ENCODE measurements at regions of chr20 and their contacts with region 1.

Region 1: DNA sequence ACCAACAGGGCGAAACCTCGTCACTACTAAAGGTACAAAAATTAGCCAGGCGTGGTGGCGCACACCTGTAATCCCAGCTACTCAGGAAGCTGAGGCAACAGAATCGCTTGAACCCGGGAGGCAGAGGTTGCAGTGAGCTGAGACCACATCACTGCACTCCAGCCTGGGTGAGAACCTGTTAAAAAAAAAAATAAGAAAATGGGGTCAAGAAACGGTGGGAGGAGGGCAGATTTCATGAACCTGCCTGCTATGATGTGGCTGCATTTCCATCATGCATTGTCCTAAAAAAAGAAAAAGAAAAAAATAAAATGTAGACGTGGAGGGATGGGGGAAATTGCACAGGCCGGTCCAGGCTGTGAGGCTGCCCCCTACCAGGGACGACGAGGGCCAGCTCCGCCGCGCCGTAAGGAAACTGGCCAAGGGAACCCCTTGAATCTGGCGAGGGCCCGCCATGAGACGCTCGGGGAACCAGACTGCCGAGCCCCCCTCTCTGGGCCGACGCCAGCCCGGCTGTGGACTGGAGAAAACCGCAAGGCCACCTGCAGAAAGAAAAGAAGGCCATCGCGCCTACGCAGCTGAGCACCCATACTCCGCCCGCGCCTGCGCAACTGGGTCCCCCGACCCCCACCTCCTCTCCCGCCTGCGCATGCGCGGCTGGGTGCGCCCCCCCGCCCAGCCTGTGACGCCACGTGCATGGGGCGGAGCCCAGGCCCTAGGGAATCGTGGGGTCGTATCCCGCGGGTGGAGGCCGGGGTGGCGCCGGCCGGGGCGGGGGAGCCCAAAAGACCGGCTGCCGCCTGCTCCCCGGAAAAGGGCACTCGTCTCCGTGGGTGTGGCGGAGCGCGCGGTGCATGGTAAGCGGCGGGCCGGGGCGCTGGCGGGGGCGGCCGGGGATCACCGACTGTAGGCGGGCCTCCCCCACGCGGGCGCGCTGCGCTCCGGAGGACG is at the start of gene ENTPD6:
- DNase-seq: peak; percentile 80
- H3K4me3 ChIP-seq: peak within 1 kb of the TSS; percentile 82 to 95 (median 91)
- H3K27ac ChIP-seq: peak within 1 kb of the TSS; percentile 51
- H3K4me1 ChIP-seq: peaks cover 11% of the 10 kb centered on the region
- H3K27me3 ChIP-seq: no peaks in the 10 kb centered on the region
- CTCF ChIP-seq: peak in 1 of 2 donors; percentile 18
- total RNA-seq, gene ENTPD6: 82.9 to 130 TPM

Region 2: DNA sequence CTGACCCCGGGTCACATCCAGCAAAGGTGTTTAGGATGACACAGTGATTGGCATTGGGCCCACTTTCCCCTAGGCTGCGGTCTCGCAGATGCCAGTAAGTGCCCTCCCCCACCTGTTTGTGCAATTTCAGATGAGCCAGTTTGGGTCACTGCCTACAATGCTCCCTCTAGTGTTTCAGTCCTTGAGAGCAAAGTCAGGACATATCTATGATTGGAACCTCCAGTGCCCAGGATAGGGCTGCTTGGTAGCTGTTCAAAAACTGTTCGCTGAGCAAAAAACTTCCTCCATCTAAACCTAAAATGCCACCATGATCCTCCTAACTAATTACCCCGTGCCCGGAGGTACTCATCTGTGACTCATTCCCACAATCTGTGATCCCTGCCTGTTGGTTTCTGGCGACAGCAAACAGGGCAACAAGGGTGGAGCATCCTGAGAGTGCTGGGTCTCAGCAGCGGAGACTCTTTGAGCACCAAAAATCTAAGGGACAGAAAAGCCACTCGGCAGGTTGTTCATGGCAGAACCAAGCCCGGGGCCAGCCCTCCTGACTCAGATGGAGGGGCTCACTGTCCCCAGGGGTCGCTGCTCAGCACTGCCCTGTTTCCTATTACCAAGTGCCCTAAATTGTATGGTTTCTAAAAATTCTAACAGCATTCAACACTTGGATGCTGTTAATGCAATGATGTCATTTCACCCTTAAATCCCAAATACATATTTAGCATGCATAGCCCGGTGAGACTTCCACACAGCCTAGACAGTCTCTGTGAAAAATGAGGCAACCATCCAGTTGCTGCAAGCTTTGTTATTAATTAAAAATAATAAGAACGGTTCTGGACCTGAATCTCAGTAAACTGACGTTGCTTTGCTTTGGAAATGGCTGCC is 118.3 kb before region 1 on chr20:
- CTCF ChIA-PET with region 1: no interaction called
- dilution Hi-C with region 1: no loop called
- in situ Hi-C with region 1: no loop called
- intact Hi-C with region 1: loop called (anchors 5 kb)
- DNase-seq: peak; percentile 65
- H3K4me3 ChIP-seq: peak overlapping the region in 1 of 3 experiments; percentile 8
- H3K27ac ChIP-seq: no peak overlapping the region
- H3K4me1 ChIP-seq: peaks cover 25% of the 10 kb centered on the region
- H3K27me3 ChIP-seq: peaks cover 17% of the 10 kb centered on the region
- CTCF ChIP-seq: peak; percentile 30 to 58

Region 3: DNA sequence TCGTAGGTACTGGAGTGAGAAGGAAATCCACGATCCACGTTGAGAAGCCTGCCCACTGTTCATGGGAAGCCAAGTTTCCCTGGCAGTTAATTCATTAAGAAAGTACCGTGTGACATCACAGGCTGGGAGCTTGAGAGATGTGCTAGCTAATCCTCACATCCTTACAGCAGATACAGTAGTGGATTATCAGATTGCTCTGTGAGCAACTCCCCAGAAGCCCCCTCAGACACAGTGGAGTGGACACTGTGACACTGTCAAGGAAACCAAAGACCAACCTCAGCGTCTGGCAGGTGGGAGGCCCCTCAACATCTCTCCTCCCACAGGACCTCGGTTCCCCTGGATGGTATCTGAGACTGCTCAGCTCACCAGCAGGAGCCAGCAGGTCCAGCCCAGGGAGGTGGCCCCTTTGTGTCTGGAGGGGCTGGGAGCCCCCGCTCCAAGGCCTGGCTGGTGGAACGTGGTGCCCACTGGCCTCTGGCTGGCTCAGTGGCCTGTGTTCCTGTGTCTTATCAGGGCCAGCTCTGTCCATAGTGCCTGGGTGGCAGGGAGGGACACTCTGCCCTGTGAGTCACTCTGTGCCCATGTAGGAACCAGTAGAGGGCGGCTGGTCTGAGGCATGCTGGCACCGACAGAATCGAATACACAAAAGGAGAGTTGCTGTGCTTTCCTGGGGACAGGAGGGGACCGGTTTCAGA is 59.8 kb after region 1 on chr20:
- CTCF ChIA-PET with region 1: no interaction called
- dilution Hi-C with region 1: loop called (anchors 5 kb)
- in situ Hi-C with region 1: loop called in 1 of 2 experiments (anchors 5 kb)
- intact Hi-C with region 1: no loop called
- DNase-seq: peak; percentile 35
- H3K4me3 ChIP-seq: no peak overlapping the region
- H3K27ac ChIP-seq: no peak overlapping the region
- H3K4me1 ChIP-seq: peaks cover 46% of the 10 kb centered on the region
- H3K27me3 ChIP-seq: no peaks in the 10 kb centered on the region
- CTCF ChIP-seq: peak in 1 of 2 donors; percentile 23

Region 4: GRCh38 chr20:25390538-25391528 is 195.5 kb after region 1 on chr20 and contains the start of gene ABHD12:
- CTCF ChIA-PET with region 1: no interaction called
- dilution Hi-C with region 1: no loop called
- in situ Hi-C with region 1: loop called in 1 of 2 experiments (anchors 25 kb)
- intact Hi-C with region 1: loop called (anchors 5 kb)
- DNase-seq: peak; percentile 97
- H3K4me3 ChIP-seq: peak within 1 kb of the TSS; percentile 63 to 97 (median 68)
- H3K27ac ChIP-seq: peak within 1 kb of the TSS; percentile 44
- H3K4me1 ChIP-seq: peaks cover 7% of the 10 kb centered on the region
- H3K27me3 ChIP-seq: no peaks in the 10 kb centered on the region
- CTCF ChIP-seq: no peak
- total RNA-seq, gene ABHD12: 21.2 to 21.6 TPM

Region 5: GRCh38 chr20:25669826-25670422 is 474.6 kb after region 1 on chr20:
- CTCF ChIA-PET with region 1: no interaction called
- dilution Hi-C with region 1: no loop called
- in situ Hi-C with region 1: loop called in 1 of 2 experiments (anchors 25 kb)
- intact Hi-C with region 1: no loop called
- DNase-seq: peak; percentile 91
- H3K4me3 ChIP-seq: no peak overlapping the region
- H3K27ac ChIP-seq: peak overlapping the region; percentile 22
- H3K4me1 ChIP-seq: peaks cover 9% of the 10 kb centered on the region
- H3K27me3 ChIP-seq: no peaks in the 10 kb centered on the region
- CTCF ChIP-seq: peak in 1 of 2 donors; percentile 10

Measured in mammary epithelial cell (primary cell).